ENCODE measurements at regions of chr13 and their contacts with region 1.

Region 1: DNA sequence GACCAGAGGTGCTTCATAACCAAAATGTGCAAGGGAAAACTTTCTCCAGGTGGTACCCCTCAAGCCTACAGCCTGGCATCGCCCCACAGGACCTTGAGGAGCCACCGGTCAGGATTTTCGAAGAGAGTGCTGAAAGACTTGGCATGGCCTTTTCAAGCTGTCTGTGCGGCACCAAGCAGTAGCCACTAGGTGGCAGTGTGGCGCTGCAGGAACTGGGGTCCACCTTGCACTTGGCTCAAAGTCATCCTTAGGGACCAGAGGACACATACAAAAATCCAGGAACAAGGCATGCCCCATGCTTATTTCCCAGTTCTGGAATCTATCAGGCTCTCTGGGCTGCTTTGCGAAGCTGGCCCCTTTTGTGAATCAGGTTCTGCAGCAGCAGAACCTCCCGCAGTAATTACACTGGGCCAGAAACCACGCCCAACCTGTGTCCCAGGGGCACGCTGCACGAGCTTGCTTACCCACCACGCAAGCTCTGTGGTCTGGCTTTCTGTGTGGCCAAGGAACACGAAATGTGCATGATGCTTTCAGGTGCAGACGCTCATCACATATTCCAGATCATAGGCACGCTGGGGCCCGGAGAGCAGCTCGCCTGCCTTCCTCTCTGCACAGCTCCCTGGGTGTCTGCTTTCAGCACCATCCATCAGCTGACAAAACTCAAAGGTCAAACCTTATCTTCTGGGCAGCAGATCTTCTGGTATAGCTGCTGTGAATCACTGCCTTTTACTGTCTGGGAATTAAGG is 87.2 kb downstream of the SLC7A1 start:
- DNase-seq: peak; percentile 82
- ATAC-seq: peak; percentile 86
- H3K4me3 Mint-ChIP-seq: no peak overlapping the region
- H3K27ac Mint-ChIP-seq: no peak overlapping the region
- H3K4me1 Mint-ChIP-seq: peaks cover 15% of the 10 kb centered on the region
- H3K27me3 Mint-ChIP-seq: peaks cover 9% of the 10 kb centered on the region

Region 2: DNA sequence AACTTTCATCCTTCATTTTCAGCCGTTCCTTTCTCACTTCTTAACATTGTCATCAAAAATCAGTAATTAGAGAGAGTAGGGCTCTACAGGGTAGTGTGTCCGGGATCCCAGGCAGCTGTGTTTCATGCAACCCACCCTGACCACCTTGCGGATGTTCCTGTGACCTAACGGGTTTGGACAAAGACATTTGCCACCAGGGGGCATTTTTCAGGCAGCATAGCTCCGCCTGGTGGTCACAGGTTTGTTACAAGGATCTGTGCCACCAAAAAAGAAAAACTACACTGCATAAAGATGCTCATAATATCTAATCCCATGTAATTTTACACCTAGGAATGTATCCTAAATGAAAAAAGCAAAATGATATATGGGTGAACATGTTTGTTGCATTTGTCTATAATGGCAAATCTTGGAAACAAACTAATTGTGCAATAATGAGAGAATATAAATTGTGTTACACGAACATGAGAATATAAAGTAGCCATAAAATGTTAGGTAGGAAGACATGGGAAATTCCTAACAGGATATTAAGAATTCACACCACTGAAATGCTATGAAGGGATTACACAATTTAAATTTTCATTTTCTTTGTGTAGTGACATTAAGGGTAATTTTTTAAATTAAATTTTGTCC is 35.9 kb before region 1 on chr13:
- CTCF ChIA-PET with region 1: interaction called, 16 read pairs
- DNase-seq: peak; percentile 67
- ATAC-seq: no peak
- H3K4me3 Mint-ChIP-seq: no peak overlapping the region
- H3K27ac Mint-ChIP-seq: no peak overlapping the region
- H3K4me1 Mint-ChIP-seq: peaks cover 2% of the 10 kb centered on the region
- H3K27me3 Mint-ChIP-seq: peaks cover 13% of the 10 kb centered on the region

Region 3: DNA sequence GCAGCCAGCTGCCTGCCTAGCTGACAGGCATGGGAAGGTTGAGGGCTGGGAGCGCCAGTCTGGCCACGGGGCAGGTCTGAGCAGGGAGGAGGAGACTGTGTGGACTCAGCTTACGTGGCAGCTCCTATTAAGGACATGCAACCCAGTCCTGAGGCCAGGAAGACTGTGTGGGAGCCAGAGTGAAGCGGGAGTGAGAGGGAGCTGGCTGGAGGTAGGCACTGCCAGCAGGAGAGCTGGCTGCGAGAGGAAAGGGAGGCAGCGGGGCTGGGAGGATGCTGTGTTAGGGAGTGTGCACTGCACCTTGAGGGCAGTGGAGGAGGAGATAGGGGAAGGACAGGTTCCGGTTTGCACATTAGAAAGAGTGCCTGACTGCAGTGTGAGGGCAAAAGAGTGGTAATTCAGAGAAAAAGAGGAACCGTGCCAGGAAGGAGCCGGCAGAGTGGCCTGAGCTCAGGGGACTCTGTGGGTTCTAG is 12.0 kb before region 1 on chr13:
- CTCF ChIA-PET with region 1: interaction called, 21 read pairs
- DNase-seq: no peak
- ATAC-seq: peak; percentile 46
- H3K4me3 Mint-ChIP-seq: no peak overlapping the region
- H3K27ac Mint-ChIP-seq: no peak overlapping the region
- H3K4me1 Mint-ChIP-seq: peaks cover 8% of the 10 kb centered on the region
- H3K27me3 Mint-ChIP-seq: peaks cover 19% of the 10 kb centered on the region

Region 4: GRCh38 chr13:29707876-29708543 is 199.7 kb after region 1 on chr13:
- CTCF ChIA-PET with region 1: interaction called, 35 read pairs
- DNase-seq: peak; percentile 57
- ATAC-seq: peak; percentile 76
- H3K4me3 Mint-ChIP-seq: no peak overlapping the region
- H3K27ac Mint-ChIP-seq: no peak overlapping the region
- H3K4me1 Mint-ChIP-seq: no peaks in the 10 kb centered on the region
- H3K27me3 Mint-ChIP-seq: peaks cover 42% of the 10 kb centered on the region

Region 5: GRCh38 chr13:29713839-29714238 is 205.5 kb after region 1 on chr13:
- CTCF ChIA-PET with region 1: interaction called, 35 read pairs
- DNase-seq: no peak
- ATAC-seq: no peak
- H3K4me3 Mint-ChIP-seq: no peak overlapping the region
- H3K27ac Mint-ChIP-seq: no peak overlapping the region
- H3K4me1 Mint-ChIP-seq: peaks cover 7% of the 10 kb centered on the region
- H3K27me3 Mint-ChIP-seq: peaks cover 34% of the 10 kb centered on the region

Measured in activated CD8-positive, alpha-beta memory T cell treated with anti-CD3 and anti-CD28 coated beads, Interleukin-2, amount 10 ng/mL, durations not matched to agents 7 days and 5 days (primary cell).